ENCODE measurements at regions of chr1 and their contacts with region 1.

Region 1: DNA sequence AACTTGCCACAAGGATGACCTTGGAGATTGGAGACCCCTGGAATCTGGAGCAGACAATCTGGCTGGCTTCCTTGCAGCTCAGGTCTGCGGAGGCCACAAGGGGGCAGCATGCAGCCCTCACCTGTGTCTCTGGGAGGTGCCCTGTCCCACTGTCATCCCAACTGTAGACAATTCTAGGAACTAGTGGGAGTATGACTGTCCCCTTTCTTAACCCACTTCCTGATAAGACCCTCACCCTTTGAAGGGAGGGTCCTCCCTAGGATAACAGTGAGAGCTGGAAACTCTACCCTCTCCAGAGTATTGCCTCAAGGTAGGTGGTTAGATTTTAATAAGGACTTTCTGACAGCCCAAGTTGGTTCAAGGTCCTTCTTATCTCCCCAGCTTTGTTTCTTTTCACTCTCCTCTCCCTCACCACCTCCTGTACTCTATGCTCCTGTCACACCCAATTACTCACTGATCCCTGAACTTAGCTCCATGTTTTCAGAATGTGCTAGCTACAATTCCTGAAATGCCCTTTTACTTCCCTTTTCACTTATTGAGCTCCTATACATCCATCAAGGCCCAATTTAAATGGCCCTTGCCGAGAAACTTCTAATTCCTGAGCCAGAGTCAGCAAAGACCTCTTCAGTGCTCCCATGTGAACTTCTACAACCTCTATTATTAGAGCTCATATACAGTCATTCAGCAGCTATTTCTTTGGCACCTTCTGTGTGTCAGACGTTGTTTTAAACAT is 9.2 kb upstream of the KCNQ4 start:
- DNase-seq: peak; percentile 77
- H3K4me3 Mint-ChIP-seq: no peak overlapping the region
- H3K27ac Mint-ChIP-seq: no peak overlapping the region
- H3K4me1 Mint-ChIP-seq: peaks cover 20% of the 10 kb centered on the region
- H3K27me3 Mint-ChIP-seq: no peaks in the 10 kb centered on the region

Region 2: GRCh38 chr1:40291293-40291692 is 483.1 kb before region 1 on chr1:
- CTCF ChIA-PET with region 1: no interaction called
- DNase-seq: no peak
- H3K4me3 Mint-ChIP-seq: no peak overlapping the region
- H3K27ac Mint-ChIP-seq: no peak overlapping the region
- H3K4me1 Mint-ChIP-seq: peaks cover 9% of the 10 kb centered on the region
- H3K27me3 Mint-ChIP-seq: no peaks in the 10 kb centered on the region

Region 3: GRCh38 chr1:40691538-40692428 is 82.6 kb before region 1 on chr1 and contains the start of gene NFYC:
- CTCF ChIA-PET with region 1: interaction called, 11 read pairs
- DNase-seq: peak; percentile 98
- H3K4me3 Mint-ChIP-seq: peak within 1 kb of the TSS; percentile 81
- H3K27ac Mint-ChIP-seq: peak within 1 kb of the TSS; percentile 94
- H3K4me1 Mint-ChIP-seq: peaks cover 55% of the 10 kb centered on the region
- H3K27me3 Mint-ChIP-seq: no peaks in the 10 kb centered on the region

Region 4: DNA sequence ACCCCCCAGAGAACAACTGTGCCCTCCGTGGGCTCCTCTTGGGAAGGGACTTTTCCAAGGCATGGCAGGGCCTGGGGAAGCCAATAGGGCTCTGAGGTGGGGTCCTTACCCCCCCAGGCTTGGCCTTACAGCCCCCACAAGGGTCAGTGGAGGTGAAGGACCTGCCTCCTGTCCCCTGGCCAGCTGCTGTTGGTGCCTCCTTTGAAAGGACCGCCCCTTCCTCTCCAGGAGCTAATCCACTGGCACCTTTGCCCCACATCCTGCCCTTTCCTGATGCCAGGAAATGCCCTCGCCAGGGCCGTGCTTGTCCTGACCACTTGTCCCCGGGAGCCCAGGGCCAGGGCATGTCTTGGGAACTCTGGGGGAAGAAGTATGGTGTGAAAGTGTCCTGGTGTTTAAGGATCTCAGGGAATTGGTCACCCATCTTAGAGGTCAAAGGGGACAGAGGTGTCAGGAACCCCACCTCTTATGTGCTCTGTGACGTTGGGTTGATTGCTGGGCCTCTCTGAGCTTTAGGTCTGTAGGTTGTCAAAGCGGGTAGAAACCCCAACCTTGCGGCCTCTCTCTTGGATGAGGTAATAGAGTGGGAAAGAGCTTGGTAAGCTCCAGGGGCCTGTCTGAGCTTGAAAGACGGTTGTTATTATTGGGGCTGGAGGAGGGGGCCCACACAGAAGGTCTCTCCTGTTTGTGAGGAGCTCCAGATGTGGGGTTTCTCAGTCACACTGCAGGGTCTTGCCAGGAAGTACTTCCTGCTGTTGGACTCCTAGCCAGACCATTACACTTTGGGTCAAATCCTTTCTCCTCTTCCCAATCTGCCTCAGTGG is 12.0 kb after region 1 on chr1:
- CTCF ChIA-PET with region 1: interaction called, 34 read pairs
- DNase-seq: no peak
- H3K4me3 Mint-ChIP-seq: no peak overlapping the region
- H3K27ac Mint-ChIP-seq: no peak overlapping the region
- H3K4me1 Mint-ChIP-seq: peaks cover 17% of the 10 kb centered on the region
- H3K27me3 Mint-ChIP-seq: peaks cover 82% of the 10 kb centered on the region

Region 5: GRCh38 chr1:40808909-40809308 is 34.5 kb after region 1 on chr1:
- CTCF ChIA-PET with region 1: interaction called, 13 read pairs
- DNase-seq: no peak
- H3K4me3 Mint-ChIP-seq: no peak overlapping the region
- H3K27ac Mint-ChIP-seq: peak overlapping the region; percentile 8
- H3K4me1 Mint-ChIP-seq: peaks cover 19% of the 10 kb centered on the region
- H3K27me3 Mint-ChIP-seq: peaks cover 57% of the 10 kb centered on the region

Region 6: DNA sequence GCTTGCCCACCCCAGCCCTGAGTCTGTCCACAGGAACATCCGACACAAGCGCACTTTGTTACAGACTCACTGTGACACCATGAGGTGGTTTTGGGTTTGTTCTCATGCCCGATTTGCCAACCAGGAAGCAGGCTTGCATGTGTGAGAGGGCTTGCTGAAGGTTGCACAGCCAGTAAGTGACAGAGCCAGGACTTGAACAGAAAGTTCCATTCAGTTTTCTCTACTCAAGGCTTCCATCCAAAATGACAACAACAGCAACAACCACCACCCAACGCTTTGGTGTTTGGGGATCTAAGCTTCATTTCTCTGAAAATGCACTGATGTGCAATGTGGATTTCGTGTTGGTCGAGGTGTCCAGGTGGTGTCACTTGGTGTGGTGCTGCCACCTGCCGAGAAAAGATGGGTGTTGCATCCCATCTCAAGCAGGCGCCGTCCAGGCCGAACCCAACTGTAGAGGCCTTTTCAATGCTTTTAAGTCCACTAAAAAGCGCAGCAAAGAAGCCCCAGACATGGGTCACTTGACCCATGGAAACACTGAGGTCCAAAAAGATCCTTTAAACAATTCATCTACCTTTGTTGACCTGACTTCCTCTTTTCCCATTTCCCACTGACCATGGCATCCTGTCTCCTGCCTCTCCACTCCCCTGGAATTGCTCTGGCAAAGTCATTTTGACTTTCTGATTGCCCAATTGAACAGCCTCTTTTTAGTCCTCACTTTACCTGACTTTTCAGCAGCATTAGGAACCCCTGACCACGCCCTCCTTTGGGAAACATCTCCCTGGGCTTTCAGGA is 75.6 kb after region 1 on chr1:
- CTCF ChIA-PET with region 1: interaction called, 139 read pairs
- DNase-seq: peak; percentile 85
- H3K4me3 Mint-ChIP-seq: peak overlapping the region; percentile 4
- H3K27ac Mint-ChIP-seq: peak overlapping the region; percentile 29
- H3K4me1 Mint-ChIP-seq: peaks cover 30% of the 10 kb centered on the region
- H3K27me3 Mint-ChIP-seq: peaks cover 17% of the 10 kb centered on the region

Region 7: DNA sequence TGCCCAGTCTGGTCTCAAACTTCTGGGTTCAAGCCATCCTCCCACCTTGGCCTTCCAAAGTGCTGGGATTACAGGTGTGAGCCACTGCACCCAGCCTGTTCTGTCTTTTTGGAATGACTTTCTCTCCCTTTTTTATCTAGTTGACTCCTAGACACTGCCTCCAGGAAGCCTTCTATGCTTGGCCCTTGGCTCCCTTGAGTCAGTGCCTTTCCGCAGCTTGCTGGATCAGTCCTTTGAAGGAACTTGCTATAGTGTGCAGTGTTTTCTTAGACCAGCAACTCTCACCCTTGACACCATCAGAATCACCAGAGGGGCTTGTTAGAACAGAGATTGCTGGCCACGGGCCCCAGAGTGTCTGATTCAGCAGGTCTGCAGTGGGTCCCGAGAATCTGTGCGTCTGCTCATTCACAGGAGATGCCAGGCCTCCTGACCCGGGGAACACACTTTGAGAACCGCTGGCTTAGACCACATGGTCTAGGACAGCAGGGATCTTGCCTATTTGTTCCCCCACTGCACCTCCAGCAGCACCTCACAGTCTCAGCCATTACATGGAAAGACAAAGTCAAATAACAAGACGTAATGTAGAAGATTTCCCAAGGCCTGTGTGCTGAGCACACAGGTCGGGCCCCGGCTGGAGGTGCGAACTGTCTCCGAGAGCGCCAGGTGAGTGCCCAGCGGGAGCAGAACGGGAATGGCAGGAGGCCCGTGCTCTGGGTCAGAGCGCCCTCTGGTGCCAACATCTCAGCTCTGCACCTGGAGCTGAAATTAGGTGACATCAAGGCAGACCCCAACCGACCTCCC is 177.7 kb after region 1 on chr1:
- CTCF ChIA-PET with region 1: interaction called, 51 read pairs
- DNase-seq: peak; percentile 77
- H3K4me3 Mint-ChIP-seq: no peak overlapping the region
- H3K27ac Mint-ChIP-seq: no peak overlapping the region
- H3K4me1 Mint-ChIP-seq: peaks cover 22% of the 10 kb centered on the region
- H3K27me3 Mint-ChIP-seq: peaks cover 64% of the 10 kb centered on the region